ENCODE measurements at regions of chr21 and their contacts with region 1.

Region 1: DNA sequence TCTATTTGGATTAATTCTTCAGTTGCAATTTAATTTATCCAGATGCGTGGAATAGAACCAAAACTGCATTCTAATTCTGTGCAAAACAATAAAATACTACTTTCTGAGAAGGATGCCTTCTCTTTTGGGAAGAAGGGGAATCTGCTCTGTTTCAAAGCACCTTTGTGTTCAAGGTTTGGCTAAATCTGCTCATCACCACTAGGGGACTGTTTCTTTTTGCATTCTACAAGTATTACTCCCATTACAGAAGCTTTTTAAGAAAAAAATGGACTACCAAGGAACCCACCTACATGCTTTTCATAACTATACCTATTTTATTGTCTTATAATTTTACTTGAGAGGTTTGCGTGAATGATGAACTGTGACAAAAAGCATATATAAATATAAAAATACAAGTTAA is 18.2 kb downstream of the MRPS6 start:
- ATAC-seq: no peak
- H3K4me3 ChIP-seq: no peak overlapping the region
- H3K27ac ChIP-seq: no peak overlapping the region
- H3K4me1 ChIP-seq: peaks cover 9 to 11% of the 10 kb centered on the region in 2 donors

Region 2: GRCh38 chr21:33884376-33885171 is 207.0 kb before region 1 on chr21:
- in situ Hi-C with region 1: no loop called
- ATAC-seq: peak in 4 of 8 experiments; percentile 42 to 69 (median 48)
- H3K4me3 ChIP-seq: no peak overlapping the region
- H3K27ac ChIP-seq: no peak overlapping the region
- H3K4me1 ChIP-seq: peaks cover 0 to 5% of the 10 kb centered on the region in 2 donors

Region 3: DNA sequence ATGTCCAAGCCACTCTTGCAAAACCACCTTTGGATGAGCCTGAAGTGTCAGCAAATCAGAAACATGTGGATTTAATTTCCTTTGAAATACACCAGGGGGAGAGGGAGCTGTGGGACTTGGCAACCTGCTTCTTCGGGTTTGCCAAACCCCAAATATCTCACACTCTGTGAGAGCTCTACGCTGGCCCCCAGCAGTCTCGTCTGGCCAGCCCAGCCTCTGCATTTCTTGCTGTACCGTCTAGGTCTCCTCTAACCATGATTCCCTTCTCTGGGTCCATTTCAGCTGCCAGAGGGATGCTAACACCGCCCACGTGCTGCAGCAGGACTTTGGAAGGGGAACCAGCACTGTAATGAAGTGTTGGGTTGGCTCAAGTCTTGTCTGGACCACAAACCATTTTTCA is 96.3 kb after region 1 on chr21:
- in situ Hi-C with region 1: loop called in 1 of 9 experiments (anchors 25 kb)
- ATAC-seq: no peak
- H3K4me3 ChIP-seq: no peak overlapping the region
- H3K27ac ChIP-seq: no peak overlapping the region
- H3K4me1 ChIP-seq: no peaks in the 10 kb centered on the region

Region 4: GRCh38 chr21:34345091-34345871 is 253.7 kb after region 1 on chr21:
- in situ Hi-C with region 1: no loop called
- ATAC-seq: no peak
- H3K4me3 ChIP-seq: no peak overlapping the region
- H3K27ac ChIP-seq: no peak overlapping the region
- H3K4me1 ChIP-seq: no peaks in the 10 kb centered on the region

Measured in motor neuron (in vitro differentiated cells).